ENCODE measurements at regions of chr20 and their contacts with region 1.

Region 1: GRCh38 chr20:64038565-64039292 is 2.7 kb downstream of the C20orf204 start:
- DNase-seq: peak; percentile 96
- H3K4me3 ChIP-seq: peak overlapping the region in 2 of 3 experiments; percentile 46 to 65
- H3K27ac ChIP-seq: peak overlapping the region; percentile 25
- H3K4me1 ChIP-seq: peaks cover 42% of the 10 kb centered on the region
- H3K27me3 ChIP-seq: no peaks in the 10 kb centered on the region
- CTCF ChIP-seq: peak; percentile 55 to 85
- POLR2A ChIP-seq: no peak

Region 2: GRCh38 chr20:63967640-63968394 is 70.9 kb before region 1 on chr20:
- CTCF ChIA-PET with region 1: no interaction called
- POLR2A ChIA-PET with region 1: no interaction called
- dilution Hi-C with region 1: no loop called
- intact Hi-C with region 1: no loop called
- DNase-seq: no peak
- H3K4me3 ChIP-seq: no peak overlapping the region
- H3K27ac ChIP-seq: no peak overlapping the region
- H3K4me1 ChIP-seq: peaks cover 19% of the 10 kb centered on the region
- H3K27me3 ChIP-seq: no peaks in the 10 kb centered on the region
- CTCF ChIP-seq: no peak
- POLR2A ChIP-seq: no peak

Region 3: GRCh38 chr20:64027981-64028685 is 10.6 kb before region 1 on chr20:
- CTCF ChIA-PET with region 1: interaction called, 15 read pairs
- POLR2A ChIA-PET with region 1: no interaction called
- dilution Hi-C with region 1: no loop called
- intact Hi-C with region 1: no loop called
- DNase-seq: no peak
- H3K4me3 ChIP-seq: no peak overlapping the region
- H3K27ac ChIP-seq: no peak overlapping the region
- H3K4me1 ChIP-seq: no peaks in the 10 kb centered on the region
- H3K27me3 ChIP-seq: no peaks in the 10 kb centered on the region
- CTCF ChIP-seq: no peak
- POLR2A ChIP-seq: no peak

Region 4: DNA sequence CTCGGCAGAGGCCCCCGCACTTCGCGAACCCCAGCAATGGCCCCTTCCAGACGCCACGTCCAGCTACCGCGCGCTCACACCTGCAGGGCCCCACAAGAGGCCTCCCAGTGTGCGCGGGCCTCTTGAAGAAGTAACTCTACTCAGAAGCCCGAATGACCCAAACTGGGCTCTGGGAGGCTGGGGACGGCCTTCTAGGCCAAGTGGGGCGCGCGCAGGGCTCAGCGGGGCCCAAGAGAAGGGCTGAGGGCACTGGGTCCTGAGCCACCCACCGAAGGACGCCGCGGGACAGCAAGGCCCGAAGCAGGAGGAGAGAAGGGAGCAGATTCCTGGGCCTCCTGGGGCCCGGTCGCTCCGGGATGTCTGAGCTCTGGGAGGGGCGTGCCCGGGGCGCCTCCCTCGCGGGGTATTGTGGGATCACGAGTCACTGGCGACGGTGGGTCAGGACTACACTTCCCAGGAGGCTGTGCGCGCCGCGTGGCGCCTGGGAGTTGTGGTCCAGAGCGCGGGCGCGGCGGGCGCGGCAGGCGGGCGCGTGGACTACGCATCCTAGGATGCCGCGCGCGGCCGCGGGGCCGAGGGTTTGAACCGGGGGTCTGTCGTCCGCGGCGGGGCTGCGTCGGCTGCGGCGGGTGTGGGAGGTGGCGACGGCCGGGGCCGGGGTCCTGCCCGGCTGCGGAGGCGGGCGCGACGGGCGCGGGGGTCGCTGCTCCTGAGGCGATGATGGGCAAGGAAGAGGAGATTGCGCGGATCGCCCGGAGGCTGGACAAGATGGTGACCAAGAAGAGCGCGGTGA is 24.1 kb after region 1 on chr20 and contains the start of gene TCEA2:
- CTCF ChIA-PET with region 1: interaction called, 412 read pairs
- POLR2A ChIA-PET with region 1: interaction called, 9 read pairs
- dilution Hi-C with region 1: no loop called
- intact Hi-C with region 1: loop called (anchors 1 kb)
- DNase-seq: peak; percentile 93
- H3K4me3 ChIP-seq: peak within 1 kb of the TSS; percentile 72 to 91 (median 84)
- H3K27ac ChIP-seq: peak within 1 kb of the TSS; percentile 63
- H3K4me1 ChIP-seq: peaks cover 18% of the 10 kb centered on the region
- H3K27me3 ChIP-seq: no peaks in the 10 kb centered on the region
- CTCF ChIP-seq: no peak
- POLR2A ChIP-seq: peak; percentile 87
- total RNA-seq, gene TCEA2: 65.5 and 71.3 TPM in 2 replicates

Region 5: DNA sequence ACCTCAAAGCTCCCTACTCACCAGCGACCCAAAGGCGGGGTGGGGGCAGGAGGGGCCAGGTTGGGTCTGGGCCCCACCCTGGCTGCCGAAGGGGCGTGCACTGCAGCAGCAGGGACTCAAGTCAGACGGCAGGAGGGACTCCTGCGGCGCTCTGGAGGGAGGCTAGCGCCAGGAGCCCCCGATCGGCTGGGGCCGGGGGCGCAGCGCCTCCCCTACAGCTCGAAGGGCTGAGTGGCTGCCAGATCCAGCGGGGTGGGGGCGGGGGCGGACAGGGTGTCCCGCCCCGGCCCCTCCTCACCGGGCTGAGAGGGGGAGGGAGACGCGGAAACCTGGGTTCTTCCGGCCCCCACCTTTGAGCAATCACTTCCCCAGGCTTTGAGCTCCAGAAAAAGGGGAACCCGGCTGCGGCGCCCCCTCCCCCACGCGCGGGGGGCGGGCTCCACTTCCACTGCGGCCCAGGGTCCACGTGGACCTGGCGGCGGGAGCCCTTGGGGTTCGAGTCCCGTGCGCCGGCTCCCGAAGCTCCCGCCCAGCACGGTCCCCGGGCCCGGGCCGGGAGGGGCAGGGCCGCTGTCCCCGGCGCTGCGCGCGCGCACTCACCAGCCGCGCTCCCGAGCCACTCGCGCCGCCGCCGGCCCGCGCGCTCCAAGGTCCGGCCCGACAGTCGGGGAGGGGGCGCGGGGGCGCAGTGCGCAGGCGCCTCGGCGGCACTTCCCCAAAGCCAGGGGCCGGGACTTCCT is 40.7 kb after region 1 on chr20 and contains the start of gene RGS19:
- CTCF ChIA-PET with region 1: interaction called, 16 read pairs
- POLR2A ChIA-PET with region 1: interaction called, 3 read pairs
- dilution Hi-C with region 1: no loop called
- intact Hi-C with region 1: no loop called
- DNase-seq: peak; percentile 57
- H3K4me3 ChIP-seq: peak within 1 kb of the TSS; percentile 71 to 94 (median 73)
- H3K27ac ChIP-seq: no peak within 1 kb of the TSS
- H3K4me1 ChIP-seq: peaks cover 20% of the 10 kb centered on the region
- H3K27me3 ChIP-seq: peaks cover 2 to 7% of the 10 kb centered on the region in 2 experiments
- CTCF ChIP-seq: no peak
- POLR2A ChIP-seq: peak; percentile 16
- total RNA-seq, gene RGS19: 27.8 and 28.3 TPM in 2 replicates

Region 6: GRCh38 chr20:64188682-64189529 is 150.2 kb after region 1 on chr20:
- CTCF ChIA-PET with region 1: no interaction called
- POLR2A ChIA-PET with region 1: no interaction called
- dilution Hi-C with region 1: no loop called
- intact Hi-C with region 1: no loop called
- DNase-seq: peak; percentile 84
- H3K4me3 ChIP-seq: no peak overlapping the region
- H3K27ac ChIP-seq: peak overlapping the region; percentile 54
- H3K4me1 ChIP-seq: peaks cover 8% of the 10 kb centered on the region
- H3K27me3 ChIP-seq: peaks cover 0 to 2% of the 10 kb centered on the region in 2 experiments
- CTCF ChIP-seq: no peak
- POLR2A ChIP-seq: no peak

Measured in endothelial cell of umbilical vein (primary cell).